Spleen (tissue), 13 donors: ENCODE measurements at regions of chr7 and their contacts with region 1.

Region 1: GRCh38 chr7:134986363-134987251 is at the start of gene AGBL3:
- DNase-seq: peak; percentile 98
- H3K4me3 ChIP-seq: peak within 1 kb of the TSS; percentile 70 to 89 (median 79)
- H3K27ac ChIP-seq: peak within 1 kb of the TSS; percentile 91 to 95 (median 94)
- H3K4me1 ChIP-seq: peaks cover 10 to 51% (median 35%) of the 10 kb centered on the region in 6 donors
- H3K27me3 ChIP-seq: no peaks in the 10 kb centered on the region
- CTCF ChIP-seq: peak; percentile 30 to 81 (median 69)
- POLR2A ChIP-seq: no peak
- total RNA-seq, gene AGBL3: 3.6 to 12.9 (median 5.1) TPM

Region 2: GRCh38 chr7:135169141-135169960 is 182.7 kb after region 1 on chr7:
- intact Hi-C with region 1: loop called (anchors 10 kb)
- DNase-seq: peak; percentile 88
- H3K4me3 ChIP-seq: peak overlapping the region; percentile 42 to 81 (median 66)
- H3K27ac ChIP-seq: peak overlapping the region; percentile 85 to 100 (median 98)
- H3K4me1 ChIP-seq: peaks cover 51 to 74% (median 68%) of the 10 kb centered on the region in 6 donors
- H3K27me3 ChIP-seq: no peaks in the 10 kb centered on the region
- CTCF ChIP-seq: peak in 9 of 11 experiments; percentile 37 to 69 (median 52)
- POLR2A ChIP-seq: no peak